Common myeloid progenitor, CD34-positive (primary cell): ENCODE measurements at regions of chr10 and their contacts with region 1.

Region 1: DNA sequence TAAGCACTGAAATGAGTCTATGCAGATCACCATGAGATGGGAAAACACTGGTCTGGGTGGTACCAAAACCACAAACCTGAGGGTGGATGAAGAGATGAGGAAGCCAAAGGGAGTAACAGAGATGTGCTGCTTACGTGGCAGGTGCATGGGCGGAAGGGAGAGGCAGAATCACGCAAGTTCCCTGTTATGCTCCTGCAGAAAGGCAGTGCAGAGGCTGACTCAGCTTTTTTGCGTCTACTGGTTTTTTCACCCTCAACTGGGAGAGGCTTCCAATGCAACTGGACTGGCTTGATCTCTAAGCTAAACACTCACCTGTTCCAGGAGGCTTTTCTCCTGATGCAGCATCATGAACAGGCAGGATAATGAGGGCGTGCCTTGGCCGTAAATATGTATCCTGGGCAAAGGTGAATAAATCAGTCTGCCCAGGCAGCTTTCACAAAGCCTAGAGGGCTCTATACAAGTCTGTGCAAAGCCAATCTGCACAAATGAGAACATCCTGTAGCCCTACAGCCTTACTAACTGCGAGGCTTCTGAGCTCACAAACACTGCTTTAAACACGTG is 95.4 kb upstream of the AFAP1L2 start:
- DNase-seq: peak; percentile 90 to 96 (median 94)
- H3K4me3 ChIP-seq: peak overlapping the region in 3 of 7 experiments; percentile 36 to 41 (median 40)
- H3K27ac ChIP-seq: peak overlapping the region; percentile 65 to 85
- H3K4me1 ChIP-seq: peaks cover 16 to 58% (median 39%) of the 10 kb centered on the region in 4 experiments
- H3K27me3 ChIP-seq: no peaks in the 10 kb centered on the region

Region 2: GRCh38 chr10:114519284-114519624 is 19.5 kb after region 1 on chr10:
- CTCF ChIA-PET with region 1: interaction called, 50 read pairs
- POLR2A ChIA-PET with region 1: no interaction called
- DNase-seq: no peak
- H3K4me3 ChIP-seq: no peak overlapping the region
- H3K27ac ChIP-seq: no peak overlapping the region
- H3K4me1 ChIP-seq: peaks cover 17 to 86% (median 41%) of the 10 kb centered on the region in 4 experiments
- H3K27me3 ChIP-seq: no peaks in the 10 kb centered on the region

Region 3: GRCh38 chr10:114541081-114541796 is 41.5 kb after region 1 on chr10:
- CTCF ChIA-PET with region 1: interaction called, 10 read pairs
- POLR2A ChIA-PET with region 1: no interaction called
- DNase-seq: no peak
- H3K4me3 ChIP-seq: no peak overlapping the region
- H3K27ac ChIP-seq: no peak overlapping the region
- H3K4me1 ChIP-seq: peaks cover 8 to 51% (median 37%) of the 10 kb centered on the region in 4 experiments
- H3K27me3 ChIP-seq: no peaks in the 10 kb centered on the region